Panc1 (cell line): ENCODE measurements at regions of chr6 and their contacts with region 1.

Region 1: GRCh38 chr6:158026054-158026900 is 44.6 kb downstream of the SYNJ2 start:
- DNase-seq: no peak
- ATAC-seq: peak; percentile 80
- H3K4me3 ChIP-seq: peak overlapping the region in 1 of 2 experiments; percentile 15; a peak in 2 of 4 replicates
- H3K27ac ChIP-seq: peak overlapping the region; percentile 87
- H3K4me1 ChIP-seq: peaks cover 86% of the 10 kb centered on the region
- H3K27me3 ChIP-seq: no peaks in the 10 kb centered on the region
- CTCF ChIP-seq: peak; percentile 89

Region 2: GRCh38 chr6:158040051-158040803 is 13.9 kb after region 1 on chr6:
- CTCF ChIA-PET with region 1: interaction called, 5 read pairs
- POLR2A ChIA-PET with region 1: interaction called, 14 read pairs
- in situ Hi-C with region 1: no loop called
- intact Hi-C with region 1: no loop called
- DNase-seq: peak; percentile 82
- ATAC-seq: peak; percentile 75
- H3K4me3 ChIP-seq: no peak overlapping the region
- H3K27ac ChIP-seq: peak overlapping the region; percentile 91
- H3K4me1 ChIP-seq: peaks cover 79% of the 10 kb centered on the region
- H3K27me3 ChIP-seq: no peaks in the 10 kb centered on the region
- CTCF ChIP-seq: no peak

Region 3: DNA sequence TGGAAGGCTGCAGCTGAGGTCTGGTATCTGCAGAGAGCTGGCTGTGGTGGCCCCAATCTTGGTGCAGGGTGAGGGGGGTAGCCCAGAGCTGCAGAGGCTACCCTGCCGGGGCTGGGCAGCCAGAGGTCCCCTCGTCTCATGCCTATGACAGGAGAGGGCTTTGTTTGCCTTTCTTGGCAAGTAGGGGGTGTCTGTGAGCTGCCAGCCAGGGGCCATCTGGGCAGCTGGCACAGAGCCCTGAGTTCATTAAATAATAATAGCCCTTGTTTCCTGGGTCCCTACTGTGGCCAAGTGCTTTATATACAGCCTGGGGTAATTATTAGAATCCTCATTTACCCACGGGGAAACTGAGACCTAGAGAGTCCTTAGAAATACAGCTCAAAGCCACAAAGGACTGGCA is 726.3 kb after region 1 on chr6:
- CTCF ChIA-PET with region 1: interaction called, 10 read pairs
- POLR2A ChIA-PET with region 1: no interaction called
- in situ Hi-C with region 1: no loop called
- intact Hi-C with region 1: no loop called
- DNase-seq: no peak
- ATAC-seq: no peak
- H3K4me3 ChIP-seq: no peak overlapping the region
- H3K27ac ChIP-seq: no peak overlapping the region
- H3K4me1 ChIP-seq: no peaks in the 10 kb centered on the region
- H3K27me3 ChIP-seq: no peaks in the 10 kb centered on the region
- CTCF ChIP-seq: no peak